ENCODE measurements at regions of chr6 and their contacts with region 1.

Region 1: DNA sequence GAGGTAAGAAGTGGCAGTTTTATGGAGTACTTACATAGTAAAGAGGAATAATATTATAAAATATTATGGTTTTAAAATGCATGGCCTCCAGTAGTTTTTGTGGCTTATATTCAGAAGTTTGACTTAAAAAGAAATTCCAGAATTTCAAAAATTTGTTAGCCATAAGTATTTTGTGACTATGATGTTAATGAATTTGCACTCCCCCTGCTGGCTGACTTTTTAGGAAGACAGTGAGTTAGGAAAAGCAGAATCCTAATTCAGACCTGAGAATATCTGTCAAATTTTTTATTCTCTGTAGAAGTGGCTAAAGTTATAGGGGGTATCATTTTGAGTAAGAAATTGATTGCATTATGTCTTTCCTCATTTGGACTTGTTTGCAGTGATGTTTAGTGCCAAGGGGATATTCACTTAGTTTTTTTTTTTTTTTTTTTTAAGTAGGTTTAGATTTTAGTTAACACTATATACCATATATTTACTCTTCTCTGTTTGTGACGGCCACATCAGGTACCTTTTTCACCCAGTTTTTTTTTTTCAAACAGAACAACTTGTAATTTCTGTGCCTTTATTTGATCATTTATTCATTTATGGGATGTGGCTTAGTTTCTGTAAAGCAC is 40.8 kb downstream of the ZFAND3 start:
- DNase-seq: peak; percentile 37
- H3K4me3 Mint-ChIP-seq: no peak overlapping the region
- H3K27ac Mint-ChIP-seq: no peak overlapping the region
- H3K4me1 Mint-ChIP-seq: peaks cover 78% of the 10 kb centered on the region
- H3K27me3 Mint-ChIP-seq: no peaks in the 10 kb centered on the region

Region 2: DNA sequence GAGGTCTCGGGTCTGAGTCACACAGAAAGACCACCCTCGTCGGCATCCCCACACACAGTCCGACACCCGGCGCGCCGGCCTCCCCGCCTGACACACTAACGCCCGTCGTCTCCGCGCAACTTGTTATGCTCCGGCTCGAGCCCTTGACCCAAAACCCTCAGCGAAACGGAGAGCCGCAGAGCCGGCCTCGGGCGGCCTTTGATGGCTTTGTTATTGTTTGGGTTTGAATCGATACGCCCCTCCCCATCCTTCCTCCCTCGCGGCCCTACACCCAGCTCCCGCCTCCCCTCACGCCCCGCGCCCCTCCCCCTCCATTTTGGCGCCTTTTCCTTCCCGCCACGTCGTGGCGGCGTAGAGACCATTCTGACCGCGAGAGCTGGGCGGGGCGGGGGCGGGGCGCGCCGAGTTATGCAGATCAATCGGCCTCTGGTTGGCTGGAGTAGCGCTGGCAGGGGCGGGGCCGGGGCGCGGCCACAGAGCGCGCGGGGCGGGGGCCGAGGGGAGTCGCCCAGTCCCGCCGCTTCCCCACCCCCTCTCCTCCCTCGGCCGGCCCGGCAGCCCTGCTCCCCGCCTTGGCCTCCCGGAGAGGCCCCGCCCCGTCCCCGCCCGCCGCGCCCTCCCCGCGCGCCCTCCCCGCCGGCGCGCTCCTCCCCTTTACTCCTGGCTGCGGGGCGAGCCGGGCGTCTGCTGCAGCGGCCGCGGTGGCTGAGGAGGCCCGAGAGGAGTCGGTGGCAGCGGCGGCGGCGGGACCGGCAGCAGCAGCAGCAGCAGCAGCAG is 690.6 kb before region 1 on chr6 and contains the start of gene PIM1:
- CTCF ChIA-PET with region 1: no interaction called
- intact Hi-C with region 1: no loop called
- DNase-seq: peak; percentile 100
- H3K4me3 Mint-ChIP-seq: peak within 1 kb of the TSS; percentile 93
- H3K27ac Mint-ChIP-seq: peak within 1 kb of the TSS; percentile 96
- H3K4me1 Mint-ChIP-seq: peaks cover 34% of the 10 kb centered on the region
- H3K27me3 Mint-ChIP-seq: no peaks in the 10 kb centered on the region
- total RNA-seq, gene PIM1: 226 to 227 TPM

Region 3: DNA sequence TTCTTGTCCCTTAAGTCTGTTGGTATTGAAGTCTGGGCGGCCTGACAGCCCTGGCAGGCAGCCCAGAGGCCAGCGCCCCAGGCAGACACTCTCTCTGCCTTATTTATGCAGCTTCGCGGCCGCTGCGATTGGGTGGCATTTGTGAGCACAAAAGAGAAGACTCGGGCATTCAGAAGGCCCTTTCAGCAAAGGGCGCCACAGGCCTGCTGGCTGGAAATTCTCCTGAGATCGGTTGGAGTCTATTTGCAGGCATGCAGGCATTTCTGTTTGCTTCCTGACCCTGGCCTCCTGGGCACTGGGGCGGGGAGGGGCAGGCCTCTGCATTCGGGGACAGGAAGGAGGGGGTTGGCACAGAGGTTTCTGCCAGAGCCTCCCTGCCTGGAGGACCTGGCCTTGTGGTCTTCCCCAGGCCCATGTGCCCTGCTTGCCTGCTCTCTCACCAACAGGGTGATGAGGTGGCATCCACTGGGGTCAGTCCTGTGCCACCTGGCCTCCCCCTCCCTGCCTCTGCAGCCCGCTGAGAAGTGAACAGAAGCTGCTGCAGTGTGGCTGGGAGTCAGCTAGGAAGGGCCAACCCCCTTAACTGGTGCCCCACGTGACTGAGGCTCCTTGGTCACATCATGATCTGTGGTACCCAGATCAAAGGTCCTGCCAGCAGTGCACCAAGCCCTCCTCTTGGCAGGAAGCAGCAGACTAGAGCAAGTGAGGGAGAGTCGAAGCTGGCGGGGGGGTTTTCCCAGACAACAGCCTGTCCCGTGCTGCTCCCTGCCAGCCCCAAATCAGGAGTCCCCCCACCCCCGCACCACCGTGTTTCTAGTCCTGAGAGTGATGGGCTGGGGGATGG is 344.0 kb before region 1 on chr6:
- CTCF ChIA-PET with region 1: no interaction called
- intact Hi-C with region 1: loop called (anchors 1 kb)
- DNase-seq: peak; percentile 98
- H3K4me3 Mint-ChIP-seq: peak overlapping the region; percentile 72
- H3K27ac Mint-ChIP-seq: peak overlapping the region; percentile 97
- H3K4me1 Mint-ChIP-seq: peaks cover 82% of the 10 kb centered on the region
- H3K27me3 Mint-ChIP-seq: no peaks in the 10 kb centered on the region

Region 4: DNA sequence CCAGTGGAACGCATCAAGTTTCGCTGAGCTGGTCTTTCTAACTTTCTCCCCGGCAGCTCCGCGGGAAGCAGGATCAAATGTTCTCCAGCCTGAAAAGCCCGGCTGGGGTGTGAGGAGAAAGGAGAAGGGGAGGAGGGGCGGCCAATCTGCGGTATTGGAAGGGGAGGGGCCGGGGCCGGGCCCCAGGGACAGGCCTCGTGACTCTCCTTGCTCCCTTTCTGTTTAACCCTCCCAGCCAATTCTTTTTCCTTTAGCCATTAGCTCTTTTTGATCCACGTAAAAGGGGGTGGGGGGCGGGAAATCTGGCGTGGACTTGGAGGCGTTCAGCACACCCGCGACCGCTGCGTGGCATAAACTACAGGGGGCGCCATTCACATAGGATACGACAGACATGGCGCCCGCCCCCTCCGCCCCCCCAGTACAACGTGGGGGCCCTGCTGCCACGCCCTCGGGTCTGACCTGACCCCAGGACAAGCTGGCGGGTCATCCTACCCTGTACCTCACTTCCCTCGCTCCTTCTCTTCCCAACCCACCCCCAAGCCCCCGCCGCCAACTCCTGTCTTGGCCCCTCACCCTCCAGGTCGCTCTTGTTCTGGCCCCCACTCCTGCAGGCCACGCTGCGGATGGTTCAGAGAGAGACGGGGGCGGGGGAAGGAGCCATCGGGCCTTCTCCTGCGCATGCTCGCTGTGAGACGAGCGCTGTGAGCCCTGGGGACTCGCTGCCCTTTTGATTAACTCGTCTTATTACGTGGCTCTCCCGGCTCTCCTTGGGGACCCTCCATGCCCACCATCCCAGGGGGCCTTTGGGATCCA is 154.9 kb before region 1 on chr6:
- CTCF ChIA-PET with region 1: no interaction called
- intact Hi-C with region 1: loop called (anchors 5 kb)
- DNase-seq: peak; percentile 71
- H3K4me3 Mint-ChIP-seq: peak overlapping the region; percentile 65
- H3K27ac Mint-ChIP-seq: peak overlapping the region; percentile 57
- H3K4me1 Mint-ChIP-seq: peaks cover 9% of the 10 kb centered on the region
- H3K27me3 Mint-ChIP-seq: no peaks in the 10 kb centered on the region

Region 5: GRCh38 chr6:37809197-37809543 is 51.2 kb before region 1 on chr6:
- CTCF ChIA-PET with region 1: no interaction called
- intact Hi-C with region 1: no loop called
- DNase-seq: no peak
- H3K4me3 Mint-ChIP-seq: no peak overlapping the region
- H3K27ac Mint-ChIP-seq: no peak overlapping the region
- H3K4me1 Mint-ChIP-seq: no peaks in the 10 kb centered on the region
- H3K27me3 Mint-ChIP-seq: peaks cover 4% of the 10 kb centered on the region

Region 6: GRCh38 chr6:37819177-37819823 is 41.0 kb before region 1 on chr6 and contains the start of gene ZFAND3:
- CTCF ChIA-PET with region 1: interaction called, 8 read pairs
- intact Hi-C with region 1: loop called (anchors 1 kb)
- DNase-seq: peak; percentile 95
- H3K4me3 Mint-ChIP-seq: peak within 1 kb of the TSS; percentile 92
- H3K27ac Mint-ChIP-seq: peak within 1 kb of the TSS; percentile 98
- H3K4me1 Mint-ChIP-seq: peaks cover 52% of the 10 kb centered on the region
- H3K27me3 Mint-ChIP-seq: no peaks in the 10 kb centered on the region
- total RNA-seq, gene ZFAND3: 33.6 to 35.3 TPM

Region 7: DNA sequence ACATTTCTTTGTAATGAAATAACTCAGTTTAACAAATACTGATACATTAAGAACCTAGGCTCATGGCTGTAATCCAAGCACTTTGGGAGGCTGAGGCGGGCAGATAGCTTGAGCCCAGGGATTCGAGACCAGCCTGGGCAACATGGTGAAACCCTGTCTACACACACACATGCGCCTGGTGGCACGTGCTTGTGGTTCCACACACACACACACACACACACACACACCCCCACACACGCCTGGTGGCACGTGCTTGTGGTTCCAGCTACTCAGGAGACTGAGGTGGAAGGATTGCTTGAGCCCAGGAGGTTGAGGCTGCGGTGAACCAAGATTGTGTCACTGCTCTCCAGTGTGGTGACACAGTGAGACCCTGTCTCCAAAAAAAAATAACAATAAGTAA is 125.0 kb after region 1 on chr6:
- CTCF ChIA-PET with region 1: interaction called, 4 read pairs
- intact Hi-C with region 1: loop called (anchors 2 kb)
- DNase-seq: no peak
- H3K4me3 Mint-ChIP-seq: no peak overlapping the region
- H3K27ac Mint-ChIP-seq: no peak overlapping the region
- H3K4me1 Mint-ChIP-seq: peaks cover 69% of the 10 kb centered on the region
- H3K27me3 Mint-ChIP-seq: no peaks in the 10 kb centered on the region

Region 8: GRCh38 chr6:38068854-38069590 is 208.7 kb after region 1 on chr6:
- CTCF ChIA-PET with region 1: no interaction called
- intact Hi-C with region 1: no loop called
- DNase-seq: no peak
- H3K4me3 Mint-ChIP-seq: no peak overlapping the region
- H3K27ac Mint-ChIP-seq: no peak overlapping the region
- H3K4me1 Mint-ChIP-seq: peaks cover 5% of the 10 kb centered on the region
- H3K27me3 Mint-ChIP-seq: no peaks in the 10 kb centered on the region

Region 9: GRCh38 chr6:38413102-38413800 is 552.9 kb after region 1 on chr6:
- CTCF ChIA-PET with region 1: no interaction called
- intact Hi-C with region 1: loop called (anchors 2 kb)
- DNase-seq: peak; percentile 19
- H3K4me3 Mint-ChIP-seq: no peak overlapping the region
- H3K27ac Mint-ChIP-seq: peak overlapping the region; percentile 52
- H3K4me1 Mint-ChIP-seq: peaks cover 20% of the 10 kb centered on the region
- H3K27me3 Mint-ChIP-seq: no peaks in the 10 kb centered on the region

Region 10: DNA sequence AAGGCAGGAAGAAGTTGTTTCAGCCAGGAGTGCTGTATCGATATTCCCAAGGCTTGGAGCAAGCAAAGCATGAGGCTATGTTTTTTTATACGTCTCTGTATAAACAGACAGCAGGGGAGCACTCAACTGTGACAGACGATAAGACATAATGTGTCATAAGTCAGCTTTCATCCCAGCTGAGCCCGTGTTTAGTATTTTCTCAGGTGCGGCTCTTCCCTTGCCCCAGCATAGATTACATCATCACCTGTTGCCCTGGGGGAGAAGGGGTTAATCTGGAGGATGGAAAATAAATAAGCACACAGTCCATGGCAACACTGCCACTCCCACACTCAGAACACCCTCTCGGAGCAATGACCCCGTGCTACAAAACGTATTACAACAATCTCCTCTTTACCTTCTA is 1391.1 kb after region 1 on chr6:
- CTCF ChIA-PET with region 1: no interaction called
- intact Hi-C with region 1: no loop called
- DNase-seq: no peak
- H3K4me3 Mint-ChIP-seq: no peak overlapping the region
- H3K27ac Mint-ChIP-seq: no peak overlapping the region
- H3K4me1 Mint-ChIP-seq: no peaks in the 10 kb centered on the region
- H3K27me3 Mint-ChIP-seq: no peaks in the 10 kb centered on the region